Caco-2 (cell line): ENCODE measurements at regions of chr7 and their contacts with region 1.

Region 1: GRCh38 chr7:97145068-97145467 is 27.6 kb downstream of the SDHAF3 start:
- DNase-seq: peak in 1 of 2 experiments; percentile 30
- H3K4me3 ChIP-seq: no peak overlapping the region
- H3K4me3 Mint-ChIP-seq: no peak overlapping the region
- H3K27ac Mint-ChIP-seq: no peak overlapping the region
- H3K4me1 ChIP-seq: no peaks in the 10 kb centered on the region
- H3K4me1 Mint-ChIP-seq: peaks cover 6% of the 10 kb centered on the region
- H3K27me3 ChIP-seq: no peaks in the 10 kb centered on the region
- H3K27me3 Mint-ChIP-seq: no peaks in the 10 kb centered on the region
- CTCF ChIP-seq: peak; percentile 41 to 58

Region 2: DNA sequence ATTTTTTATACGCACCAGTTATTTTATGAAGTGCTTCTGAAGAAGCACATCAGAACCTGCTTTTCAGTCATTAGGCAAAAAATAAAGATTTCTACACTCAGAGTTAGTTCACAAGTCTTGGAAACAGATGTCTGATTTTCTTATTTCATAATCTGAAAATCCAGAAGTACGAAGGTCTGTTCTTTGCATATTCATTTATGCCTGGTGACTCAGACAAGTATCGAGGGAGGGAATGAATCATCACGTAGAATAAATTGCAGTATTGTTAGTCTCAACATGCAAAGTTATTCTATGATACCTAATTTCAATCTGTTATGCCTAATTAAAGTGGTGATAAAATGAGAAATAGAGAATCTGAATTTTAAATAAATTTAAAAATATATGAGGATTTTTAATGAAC is 321.8 kb before region 1 on chr7:
- CTCF ChIA-PET with region 1: no interaction called
- POLR2A ChIA-PET with region 1: no interaction called
- intact Hi-C with region 1: loop called (anchors 5 kb)
- DNase-seq: no peak
- H3K4me3 ChIP-seq: no peak overlapping the region
- H3K4me3 Mint-ChIP-seq: no peak overlapping the region
- H3K27ac Mint-ChIP-seq: no peak overlapping the region
- H3K4me1 ChIP-seq: no peaks in the 10 kb centered on the region
- H3K4me1 Mint-ChIP-seq: no peaks in the 10 kb centered on the region
- H3K27me3 ChIP-seq: no peaks in the 10 kb centered on the region
- H3K27me3 Mint-ChIP-seq: peaks cover 4% of the 10 kb centered on the region
- CTCF ChIP-seq: no peak

Region 3: GRCh38 chr7:97179454-97180104 is 34.5 kb after region 1 on chr7:
- CTCF ChIA-PET with region 1: interaction called, 4 read pairs
- POLR2A ChIA-PET with region 1: no interaction called
- intact Hi-C with region 1: loop called (anchors 2 kb)
- DNase-seq: peak; percentile 53 to 63
- H3K4me3 ChIP-seq: no peak overlapping the region
- H3K4me3 Mint-ChIP-seq: no peak overlapping the region
- H3K27ac Mint-ChIP-seq: no peak overlapping the region
- H3K4me1 ChIP-seq: no peaks in the 10 kb centered on the region
- H3K4me1 Mint-ChIP-seq: no peaks in the 10 kb centered on the region
- H3K27me3 ChIP-seq: no peaks in the 10 kb centered on the region
- H3K27me3 Mint-ChIP-seq: no peaks in the 10 kb centered on the region
- CTCF ChIP-seq: peak; percentile 84 to 86

Region 4: DNA sequence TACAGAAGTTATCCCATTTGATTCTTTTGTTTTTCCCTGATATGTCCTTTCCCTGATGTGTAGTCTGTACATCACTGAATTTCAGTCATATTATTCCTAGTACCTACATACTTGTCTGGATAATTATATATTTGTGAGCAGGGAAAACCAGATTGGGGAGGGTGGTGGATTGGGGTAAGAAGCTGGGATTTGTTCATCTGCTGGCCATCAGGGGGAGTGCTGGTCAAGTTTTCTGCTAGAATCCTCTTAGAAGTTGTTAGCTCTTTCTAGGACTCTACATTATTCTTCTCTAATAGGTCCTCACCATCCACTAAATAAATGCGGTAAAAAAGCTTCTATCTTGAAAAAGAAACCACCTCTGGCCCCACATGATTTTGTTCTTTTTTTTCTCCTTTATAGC is 354.1 kb after region 1 on chr7:
- CTCF ChIA-PET with region 1: interaction called, 3 read pairs
- POLR2A ChIA-PET with region 1: no interaction called
- intact Hi-C with region 1: loop called (anchors 5 kb)
- DNase-seq: peak; percentile 43 to 51
- H3K4me3 ChIP-seq: no peak overlapping the region
- H3K4me3 Mint-ChIP-seq: no peak overlapping the region
- H3K27ac Mint-ChIP-seq: no peak overlapping the region
- H3K4me1 ChIP-seq: no peaks in the 10 kb centered on the region
- H3K4me1 Mint-ChIP-seq: no peaks in the 10 kb centered on the region
- H3K27me3 ChIP-seq: no peaks in the 10 kb centered on the region
- H3K27me3 Mint-ChIP-seq: peaks cover 7% of the 10 kb centered on the region
- CTCF ChIP-seq: peak; percentile 52 to 76

Region 5: GRCh38 chr7:97835296-97836138 is 690.4 kb after region 1 on chr7:
- CTCF ChIA-PET with region 1: no interaction called
- POLR2A ChIA-PET with region 1: no interaction called
- intact Hi-C with region 1: loop called (anchors 1 kb)
- DNase-seq: peak; percentile 62 to 71
- H3K4me3 ChIP-seq: no peak overlapping the region
- H3K4me3 Mint-ChIP-seq: no peak overlapping the region
- H3K27ac Mint-ChIP-seq: no peak overlapping the region
- H3K4me1 ChIP-seq: no peaks in the 10 kb centered on the region
- H3K4me1 Mint-ChIP-seq: no peaks in the 10 kb centered on the region
- H3K27me3 ChIP-seq: no peaks in the 10 kb centered on the region
- H3K27me3 Mint-ChIP-seq: peaks cover 9% of the 10 kb centered on the region
- CTCF ChIP-seq: peak; percentile 60 to 69